Heart left ventricle (tissue), 16 donors: ENCODE measurements at regions of chr6 and their contacts with region 1.

Region 1: GRCh38 chr6:17987576-17988421 is at the start of gene KIF13A:
- DNase-seq: peak; percentile 78 to 88 (median 81)
- ATAC-seq: peak; percentile 23 to 83 (median 73)
- H3K4me3 ChIP-seq: peak within 1 kb of the TSS; percentile 52 to 97 (median 80)
- H3K27ac ChIP-seq: peak within 1 kb of the TSS; percentile 93 to 99 (median 96)
- H3K4me1 ChIP-seq: peaks cover 0 to 46% (median 19%) of the 10 kb centered on the region in 12 donors
- H3K27me3 ChIP-seq: peaks cover 0 to 2% (median 0%) of the 10 kb centered on the region in 9 donors
- CTCF ChIP-seq: peak in 9 of 12 donors; percentile 8 to 58 (median 32)
- POLR2A ChIP-seq: peak in 1 of 2 donors; percentile 52
- total RNA-seq, gene KIF13A: 49.2 to 148 (median 85.1) TPM

Region 2: GRCh38 chr6:17599885-17600526 is 387.8 kb before region 1 on chr6 and contains the start of gene FAM8A1:
- intact Hi-C with region 1: loop called in 1 of 10 experiments (anchors 10 kb)
- DNase-seq: peak; percentile 96 to 98 (median 97)
- ATAC-seq: peak; percentile 97 to 99 (median 99)
- H3K4me3 ChIP-seq: peak within 1 kb of the TSS; percentile 75 to 99 (median 94)
- H3K27ac ChIP-seq: peak within 1 kb of the TSS; percentile 80 to 98 (median 95)
- H3K4me1 ChIP-seq: peaks cover 0 to 20% (median 13%) of the 10 kb centered on the region in 12 donors
- H3K27me3 ChIP-seq: no peaks in the 10 kb centered on the region
- CTCF ChIP-seq: peak; percentile 37 to 75 (median 53)
- POLR2A ChIP-seq: peak in 1 of 2 donors; percentile 80
- total RNA-seq, gene FAM8A1: 14.9 to 24.5 (median 17.5) TPM

Region 3: GRCh38 chr6:17816921-17817611 is 170.7 kb before region 1 on chr6:
- intact Hi-C with region 1: no loop called
- DNase-seq: no peak
- ATAC-seq: no peak
- H3K4me3 ChIP-seq: no peak overlapping the region
- H3K27ac ChIP-seq: no peak overlapping the region
- H3K4me1 ChIP-seq: peaks cover 0 to 5% (median 0%) of the 10 kb centered on the region in 12 donors
- H3K27me3 ChIP-seq: no peaks in the 10 kb centered on the region
- CTCF ChIP-seq: no peak
- POLR2A ChIP-seq: no peak

Region 4: DNA sequence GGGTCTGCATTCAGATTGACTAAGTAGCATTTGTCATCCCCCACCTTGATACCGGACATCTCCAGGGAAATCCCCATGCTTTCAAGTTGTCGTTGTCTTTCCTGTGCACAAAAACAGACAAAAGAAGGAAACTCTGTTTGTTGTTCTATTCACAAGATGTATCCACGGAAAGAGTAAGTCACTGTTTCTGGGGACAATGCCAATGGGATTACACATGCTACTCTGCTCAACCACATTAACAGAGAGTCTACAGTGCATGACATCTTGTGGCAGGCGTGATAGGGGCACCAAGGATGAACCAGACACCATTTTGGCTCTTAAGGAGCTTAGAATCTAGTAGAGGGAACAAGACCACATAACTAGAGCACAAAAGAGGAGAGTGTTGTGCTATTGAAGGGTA is 156.7 kb before region 1 on chr6:
- intact Hi-C with region 1: loop called in 6 of 10 experiments (anchors 5 to 10 kb)
- DNase-seq: peak in 3 of 5 donors; percentile 25 to 44 (median 44)
- ATAC-seq: peak; percentile 80 to 92 (median 90)
- H3K4me3 ChIP-seq: no peak overlapping the region
- H3K27ac ChIP-seq: peak overlapping the region in 7 of 12 donors; percentile 4 to 64 (median 27)
- H3K4me1 ChIP-seq: peaks cover 0 to 23% (median 8%) of the 10 kb centered on the region in 12 donors
- H3K27me3 ChIP-seq: no peaks in the 10 kb centered on the region
- CTCF ChIP-seq: no peak
- POLR2A ChIP-seq: no peak

Region 5: GRCh38 chr6:17865798-17866725 is 121.7 kb before region 1 on chr6:
- intact Hi-C with region 1: loop called in 8 of 10 experiments (anchors 5 to 10 kb)
- DNase-seq: peak; percentile 61 to 89 (median 66)
- ATAC-seq: peak; percentile 88 to 95 (median 92)
- H3K4me3 ChIP-seq: no peak overlapping the region
- H3K27ac ChIP-seq: peak overlapping the region; percentile 31 to 79 (median 70)
- H3K4me1 ChIP-seq: peaks cover 0 to 86% (median 52%) of the 10 kb centered on the region in 12 donors
- H3K27me3 ChIP-seq: no peaks in the 10 kb centered on the region
- CTCF ChIP-seq: no peak
- POLR2A ChIP-seq: no peak

Region 6: GRCh38 chr6:17962436-17963031 is 25.3 kb before region 1 on chr6:
- intact Hi-C with region 1: loop called in 1 of 10 experiments (anchors 2 kb)
- DNase-seq: peak; percentile 78 to 91 (median 86)
- ATAC-seq: peak; percentile 98 to 99 (median 98)
- H3K4me3 ChIP-seq: peak overlapping the region in 2 of 12 donors; percentile 2 to 5
- H3K27ac ChIP-seq: peak overlapping the region in 9 of 12 donors; percentile 18 to 79 (median 48)
- H3K4me1 ChIP-seq: peaks cover 9 to 96% (median 68%) of the 10 kb centered on the region in 12 donors
- H3K27me3 ChIP-seq: no peaks in the 10 kb centered on the region
- CTCF ChIP-seq: no peak
- POLR2A ChIP-seq: no peak

Region 7: GRCh38 chr6:18306977-18307376 is 319.2 kb after region 1 on chr6:
- intact Hi-C with region 1: no loop called
- DNase-seq: no peak
- ATAC-seq: no peak
- H3K4me3 ChIP-seq: no peak overlapping the region
- H3K27ac ChIP-seq: no peak overlapping the region
- H3K4me1 ChIP-seq: peaks cover 0 to 4% (median 0%) of the 10 kb centered on the region in 12 donors
- H3K27me3 ChIP-seq: no peaks in the 10 kb centered on the region
- CTCF ChIP-seq: no peak
- POLR2A ChIP-seq: no peak